Left colon (tissue), 2 donors: ENCODE measurements at regions of chr15 and their contacts with region 1.

Region 1: GRCh38 chr15:73560501-73561117 is 72.6 kb downstream of the NPTN start:
- DNase-seq: no peak
- ATAC-seq: peak; percentile 78

Region 2: GRCh38 chr15:73637527-73637926 is 76.9 kb after region 1 on chr15:
- intact Hi-C with region 1: loop called in 1 of 2 experiments (anchors 2 kb)
- DNase-seq: no peak
- ATAC-seq: no peak

Region 3: GRCh38 chr15:73697033-73697467 is 136.4 kb after region 1 on chr15:
- intact Hi-C with region 1: loop called in 1 of 2 experiments (anchors 5 kb)
- DNase-seq: peak; percentile 75 to 80
- ATAC-seq: peak; percentile 89